T-cell (primary cell): ENCODE measurements at regions of chr5 and their contacts with region 1.

Region 1: GRCh38 chr5:150846654-150847333 is 473 bp downstream of the IRGM start:
- DNase-seq: peak; percentile 9 to 91 (median 52)
- ATAC-seq: peak; percentile 90 to 95 (median 92)
- H3K4me3 ChIP-seq: peak overlapping the region in 1 of 2 donors; percentile 42
- H3K4me3 Mint-ChIP-seq: peak overlapping the region; percentile 72 to 79 (median 75)
- H3K27ac ChIP-seq: peak overlapping the region; percentile 69
- H3K27ac Mint-ChIP-seq: peak overlapping the region; percentile 86 to 92
- H3K4me1 ChIP-seq: peaks cover 5 to 19% of the 10 kb centered on the region in 2 experiments
- H3K4me1 Mint-ChIP-seq: peaks cover 13 to 23% (median 16%) of the 10 kb centered on the region in 3 donors
- H3K27me3 ChIP-seq: no peaks in the 10 kb centered on the region
- H3K27me3 Mint-ChIP-seq: no peaks in the 10 kb centered on the region

Region 2: DNA sequence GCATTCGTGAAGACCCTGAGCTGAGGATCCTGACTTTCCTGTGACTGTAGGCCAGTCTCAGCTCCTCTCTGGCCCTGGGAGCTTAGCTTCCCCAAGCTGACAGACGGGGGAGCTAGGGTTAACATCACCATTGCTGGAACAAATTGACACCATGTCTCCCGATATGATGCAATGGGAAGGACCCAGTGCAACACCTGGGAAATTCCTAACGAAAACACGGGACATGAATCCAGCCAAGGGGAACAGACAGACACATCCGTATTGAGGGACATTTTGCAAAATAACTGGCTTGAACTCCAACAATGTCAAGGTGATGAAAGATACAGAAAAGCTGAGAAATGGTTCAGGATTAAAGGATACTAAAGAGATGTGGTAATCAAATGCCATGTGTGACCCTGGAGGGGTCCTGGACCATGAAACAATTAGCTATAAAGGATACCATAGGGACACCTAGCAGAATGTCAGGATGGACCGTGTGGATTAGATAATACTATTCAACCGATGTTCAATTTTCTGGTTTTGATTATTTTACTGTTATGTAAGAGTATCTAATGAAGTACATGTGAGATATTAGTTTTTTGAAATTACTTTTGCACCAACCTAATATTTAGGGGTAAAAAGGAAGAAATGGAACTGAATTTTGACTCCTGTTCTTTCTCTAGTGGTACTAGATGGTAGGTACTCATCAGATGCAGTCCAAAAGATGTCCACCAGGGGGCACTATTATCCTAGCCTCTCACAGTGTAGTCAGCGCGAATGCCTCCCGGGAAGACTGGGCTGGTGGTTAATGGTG is 286.2 kb before region 1 on chr5:
- CTCF ChIA-PET with region 1: interaction called, 21 to 43 read pairs
- POLR2A ChIA-PET with region 1: no interaction called
- DNase-seq: peak; percentile 40 to 91 (median 77)
- ATAC-seq: peak; percentile 89 to 98 (median 92)
- H3K4me3 ChIP-seq: no peak overlapping the region
- H3K4me3 Mint-ChIP-seq: no peak overlapping the region
- H3K27ac ChIP-seq: no peak overlapping the region
- H3K27ac Mint-ChIP-seq: no peak overlapping the region
- H3K4me1 ChIP-seq: no peaks in the 10 kb centered on the region
- H3K4me1 Mint-ChIP-seq: no peaks in the 10 kb centered on the region
- H3K27me3 ChIP-seq: no peaks in the 10 kb centered on the region
- H3K27me3 Mint-ChIP-seq: no peaks in the 10 kb centered on the region

Region 3: DNA sequence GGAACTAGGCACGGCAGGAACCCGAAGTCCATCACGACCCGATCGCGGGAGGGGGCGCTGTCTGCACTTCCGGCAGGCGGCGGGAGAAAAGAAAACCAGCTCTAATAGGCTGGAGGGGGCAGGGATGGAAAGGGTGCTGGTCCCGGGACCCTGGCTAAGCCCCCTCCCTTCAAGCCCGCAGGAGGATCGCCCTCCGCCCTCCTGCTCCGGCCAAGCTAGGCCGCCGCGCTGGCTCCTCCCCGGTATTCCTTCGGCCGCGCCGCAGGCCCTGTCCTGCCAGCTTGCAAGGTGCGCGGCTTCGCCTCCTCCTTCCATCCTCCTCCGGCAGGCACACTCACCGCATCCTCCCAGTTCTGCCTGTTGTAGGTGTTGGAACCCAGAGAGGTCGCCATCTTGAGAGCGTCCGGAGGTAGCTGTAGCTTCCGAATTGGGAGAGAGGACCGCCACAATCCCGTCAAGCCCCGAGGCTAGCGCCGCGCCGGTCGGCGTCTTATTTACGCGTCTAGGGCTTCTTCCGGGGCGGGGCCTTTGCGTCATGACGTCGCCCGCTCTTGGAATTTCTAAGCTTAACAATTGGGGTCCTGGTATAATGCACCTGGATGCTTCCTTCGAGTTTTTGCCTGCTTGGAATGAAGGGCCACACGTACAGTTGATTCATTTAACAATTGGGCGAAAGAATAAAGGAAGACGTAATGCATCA is 146.1 kb before region 1 on chr5 and contains the start of gene RBM22:
- CTCF ChIA-PET with region 1: interaction called, 4 to 53 read pairs
- POLR2A ChIA-PET with region 1: interaction called in 1 of 2 experiments, 11 read pairs
- DNase-seq: peak; percentile 82 to 96 (median 91)
- ATAC-seq: peak; percentile 96
- H3K4me3 ChIP-seq: peak within 1 kb of the TSS; percentile 92 to 98
- H3K4me3 Mint-ChIP-seq: no peak within 1 kb of the TSS
- H3K27ac ChIP-seq: peak within 1 kb of the TSS; percentile 98
- H3K27ac Mint-ChIP-seq: no peak within 1 kb of the TSS
- H3K4me1 ChIP-seq: peaks cover 9 to 14% of the 10 kb centered on the region in 2 experiments
- H3K4me1 Mint-ChIP-seq: peaks cover 0 to 11% (median 5%) of the 10 kb centered on the region in 3 donors
- H3K27me3 ChIP-seq: no peaks in the 10 kb centered on the region
- H3K27me3 Mint-ChIP-seq: no peaks in the 10 kb centered on the region
- total RNA-seq, gene RBM22: 73.3 to 98.8 (median 82.3) TPM

Region 4: DNA sequence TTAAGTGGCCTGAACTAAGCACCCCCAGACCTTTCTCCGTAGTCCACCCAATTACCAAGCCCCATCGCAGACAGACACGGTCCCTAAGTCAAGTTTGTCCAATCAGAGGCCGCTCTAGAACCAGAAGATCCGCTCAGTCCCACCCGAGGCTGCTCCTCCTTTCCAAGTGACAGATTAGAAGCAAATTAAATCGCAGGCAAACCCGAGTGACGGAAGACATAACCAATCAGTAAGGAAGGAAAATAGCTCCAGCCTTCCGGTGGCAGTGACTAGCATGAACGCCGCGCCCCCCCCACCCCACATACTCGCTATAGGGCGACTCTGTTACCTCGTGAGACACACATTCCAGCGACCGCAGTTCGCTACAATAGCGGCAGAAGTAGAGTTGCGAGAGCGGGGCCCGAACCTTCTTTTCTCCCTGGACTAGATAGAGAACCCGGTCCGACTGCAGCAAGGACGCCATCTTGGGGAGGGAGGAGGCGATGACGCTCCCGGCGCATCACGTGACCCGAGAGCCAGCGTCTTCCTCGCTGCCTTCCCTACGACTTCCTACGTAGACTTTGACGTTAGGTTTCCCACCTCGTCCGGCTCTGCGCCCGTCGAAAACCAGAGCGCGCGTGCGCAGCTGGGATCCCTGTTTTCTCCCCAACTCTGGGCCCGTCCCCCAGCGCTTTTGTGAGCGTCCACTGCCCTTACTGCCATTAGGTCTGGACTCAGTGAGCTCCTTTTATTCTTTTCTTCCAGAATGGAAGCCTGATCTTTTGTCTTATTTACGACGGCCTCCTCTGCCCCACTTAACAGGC is 88.1 kb before region 1 on chr5 and contains the start of gene DCTN4:
- CTCF ChIA-PET with region 1: interaction called in 1 of 2 experiments, 18 read pairs
- POLR2A ChIA-PET with region 1: interaction called in 1 of 2 experiments, 4 read pairs
- DNase-seq: peak; percentile 88 to 98 (median 92)
- ATAC-seq: peak; percentile 92 to 95 (median 94)
- H3K4me3 ChIP-seq: peak within 1 kb of the TSS; percentile 79 to 89
- H3K4me3 Mint-ChIP-seq: no peak within 1 kb of the TSS
- H3K27ac ChIP-seq: peak within 1 kb of the TSS; percentile 90
- H3K27ac Mint-ChIP-seq: no peak within 1 kb of the TSS
- H3K4me1 ChIP-seq: peaks cover 11 to 20% of the 10 kb centered on the region in 2 experiments
- H3K4me1 Mint-ChIP-seq: peaks cover 29 to 40% (median 37%) of the 10 kb centered on the region in 3 donors
- H3K27me3 ChIP-seq: no peaks in the 10 kb centered on the region
- H3K27me3 Mint-ChIP-seq: no peaks in the 10 kb centered on the region
- total RNA-seq, gene DCTN4: 36.9 to 79.8 (median 38.4) TPM

Region 5: GRCh38 chr5:150778517-150779396 is 68.0 kb before region 1 on chr5 and contains the start of gene SMIM3:
- CTCF ChIA-PET with region 1: interaction called, 3 to 45 read pairs
- POLR2A ChIA-PET with region 1: interaction called in 1 of 2 experiments, 3 read pairs
- DNase-seq: peak; percentile 35 to 74 (median 56)
- ATAC-seq: peak; percentile 72 to 75 (median 72)
- H3K4me3 ChIP-seq: peak within 1 kb of the TSS; percentile 81 to 94
- H3K4me3 Mint-ChIP-seq: peak within 1 kb of the TSS; percentile 98 to 99 (median 99)
- H3K27ac ChIP-seq: peak within 1 kb of the TSS; percentile 47
- H3K27ac Mint-ChIP-seq: peak within 1 kb of the TSS; percentile 92 to 94
- H3K4me1 ChIP-seq: peaks cover 18 to 43% of the 10 kb centered on the region in 2 experiments
- H3K4me1 Mint-ChIP-seq: peaks cover 51 to 59% (median 58%) of the 10 kb centered on the region in 3 donors
- H3K27me3 ChIP-seq: no peaks in the 10 kb centered on the region
- H3K27me3 Mint-ChIP-seq: peaks cover 1% of the 10 kb centered on the region in 2 donors
- total RNA-seq, gene SMIM3: 2.8 to 9.1 (median 5.7) TPM

Region 6: GRCh38 chr5:150801117-150801927 is 45.5 kb before region 1 on chr5:
- CTCF ChIA-PET with region 1: interaction called, 3 to 31 read pairs
- POLR2A ChIA-PET with region 1: no interaction called
- DNase-seq: peak in 1 of 35 experiments; percentile 72
- ATAC-seq: peak in 1 of 4 experiments; percentile 49
- H3K4me3 ChIP-seq: no peak overlapping the region
- H3K4me3 Mint-ChIP-seq: no peak overlapping the region
- H3K27ac ChIP-seq: no peak overlapping the region
- H3K27ac Mint-ChIP-seq: no peak overlapping the region
- H3K4me1 ChIP-seq: peaks cover 4 to 8% of the 10 kb centered on the region in 2 experiments
- H3K4me1 Mint-ChIP-seq: peaks cover 0 to 9% (median 4%) of the 10 kb centered on the region in 3 donors
- H3K27me3 ChIP-seq: no peaks in the 10 kb centered on the region
- H3K27me3 Mint-ChIP-seq: peaks cover 0 to 11% of the 10 kb centered on the region in 2 donors

Region 7: DNA sequence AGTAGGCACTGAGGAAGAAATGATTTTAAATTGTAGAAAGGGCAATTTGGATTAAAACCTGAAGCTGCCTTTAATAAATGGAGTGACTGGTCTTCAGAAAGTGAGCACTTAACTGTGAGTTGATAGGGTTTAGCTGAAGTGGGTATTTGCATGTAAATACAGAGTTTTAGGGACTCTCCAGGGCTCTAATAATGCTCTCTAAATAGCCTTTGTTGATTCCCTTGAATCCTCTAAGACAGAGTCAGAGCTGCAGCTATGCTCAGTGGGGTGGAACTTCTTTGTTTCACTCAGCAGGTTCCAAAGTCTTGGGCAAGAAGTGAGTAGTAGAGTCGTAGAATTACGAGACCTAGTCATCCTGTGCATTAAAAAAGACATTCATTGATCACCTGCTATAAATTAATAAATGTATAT is 1056.5 kb after region 1 on chr5:
- CTCF ChIA-PET with region 1: no interaction called
- POLR2A ChIA-PET with region 1: no interaction called
- DNase-seq: no peak
- ATAC-seq: no peak
- H3K4me3 ChIP-seq: no peak overlapping the region
- H3K4me3 Mint-ChIP-seq: no peak overlapping the region
- H3K27ac ChIP-seq: no peak overlapping the region
- H3K27ac Mint-ChIP-seq: no peak overlapping the region
- H3K4me1 ChIP-seq: no peaks in the 10 kb centered on the region
- H3K4me1 Mint-ChIP-seq: no peaks in the 10 kb centered on the region
- H3K27me3 ChIP-seq: peaks cover 0 to 3% of the 10 kb centered on the region in 2 experiments
- H3K27me3 Mint-ChIP-seq: peaks cover 3 to 11% of the 10 kb centered on the region in 2 donors